Ascending aorta (tissue), 2 donors: ENCODE measurements at regions of chr3 and their contacts with region 1.

Region 1: DNA sequence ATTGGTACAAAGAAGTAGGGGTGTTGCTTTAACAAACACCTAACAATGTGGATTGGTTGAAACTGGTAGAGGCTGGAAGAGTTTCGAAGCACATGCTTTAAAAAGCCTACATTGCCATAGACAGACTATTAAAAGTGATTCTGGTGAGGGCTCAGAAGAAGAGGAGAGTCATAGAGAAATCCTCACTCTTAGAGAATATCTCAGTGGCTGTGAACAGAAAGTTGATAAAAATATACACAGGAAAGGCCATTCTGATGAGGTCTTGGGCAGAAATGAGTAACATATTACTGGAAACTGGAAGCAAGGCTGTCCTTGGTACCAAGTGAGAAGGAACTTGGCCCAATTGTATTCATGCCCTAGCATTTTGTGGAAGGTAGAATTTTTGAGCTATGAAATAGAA is 173.7 kb upstream of the CRBN start:
- DNase-seq: no peak
- H3K4me3 ChIP-seq: no peak overlapping the region
- H3K27ac ChIP-seq: peak overlapping the region in 1 of 2 donors; percentile 63
- H3K4me1 ChIP-seq: no peaks in the 10 kb centered on the region
- H3K27me3 ChIP-seq: no peaks in the 10 kb centered on the region
- CTCF ChIP-seq: no peak

Region 2: DNA sequence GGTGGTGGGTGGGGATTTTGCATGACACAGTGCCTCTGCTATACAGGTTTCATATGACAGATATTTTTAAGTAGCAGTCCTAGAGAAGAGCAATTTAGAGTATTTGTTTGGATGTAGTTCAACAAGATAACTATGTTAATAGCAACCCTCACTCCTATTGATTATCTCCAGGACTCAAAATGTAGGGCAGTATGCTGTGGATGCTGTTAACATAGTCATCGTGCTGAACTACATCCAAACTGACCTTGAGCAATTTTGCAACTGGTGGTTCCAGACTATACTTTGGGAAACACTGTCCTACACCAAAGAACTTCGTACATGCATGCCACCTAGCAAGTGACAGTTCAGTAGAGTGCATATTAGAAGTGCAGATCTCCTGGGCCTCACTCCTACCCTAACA is 360.6 kb before region 1 on chr3:
- intact Hi-C with region 1: no loop called
- DNase-seq: no peak
- H3K4me3 ChIP-seq: no peak overlapping the region
- H3K27ac ChIP-seq: no peak overlapping the region
- H3K4me1 ChIP-seq: no peaks in the 10 kb centered on the region
- H3K27me3 ChIP-seq: no peaks in the 10 kb centered on the region
- CTCF ChIP-seq: no peak

Region 3: GRCh38 chr3:3334491-3334890 is 18.7 kb before region 1 on chr3:
- intact Hi-C with region 1: loop called (anchors 1 kb)
- DNase-seq: no peak
- H3K4me3 ChIP-seq: no peak overlapping the region
- H3K27ac ChIP-seq: no peak overlapping the region
- H3K4me1 ChIP-seq: no peaks in the 10 kb centered on the region
- H3K27me3 ChIP-seq: no peaks in the 10 kb centered on the region
- CTCF ChIP-seq: no peak